ENCODE measurements at regions of chr20 and their contacts with region 1.

Region 1: DNA sequence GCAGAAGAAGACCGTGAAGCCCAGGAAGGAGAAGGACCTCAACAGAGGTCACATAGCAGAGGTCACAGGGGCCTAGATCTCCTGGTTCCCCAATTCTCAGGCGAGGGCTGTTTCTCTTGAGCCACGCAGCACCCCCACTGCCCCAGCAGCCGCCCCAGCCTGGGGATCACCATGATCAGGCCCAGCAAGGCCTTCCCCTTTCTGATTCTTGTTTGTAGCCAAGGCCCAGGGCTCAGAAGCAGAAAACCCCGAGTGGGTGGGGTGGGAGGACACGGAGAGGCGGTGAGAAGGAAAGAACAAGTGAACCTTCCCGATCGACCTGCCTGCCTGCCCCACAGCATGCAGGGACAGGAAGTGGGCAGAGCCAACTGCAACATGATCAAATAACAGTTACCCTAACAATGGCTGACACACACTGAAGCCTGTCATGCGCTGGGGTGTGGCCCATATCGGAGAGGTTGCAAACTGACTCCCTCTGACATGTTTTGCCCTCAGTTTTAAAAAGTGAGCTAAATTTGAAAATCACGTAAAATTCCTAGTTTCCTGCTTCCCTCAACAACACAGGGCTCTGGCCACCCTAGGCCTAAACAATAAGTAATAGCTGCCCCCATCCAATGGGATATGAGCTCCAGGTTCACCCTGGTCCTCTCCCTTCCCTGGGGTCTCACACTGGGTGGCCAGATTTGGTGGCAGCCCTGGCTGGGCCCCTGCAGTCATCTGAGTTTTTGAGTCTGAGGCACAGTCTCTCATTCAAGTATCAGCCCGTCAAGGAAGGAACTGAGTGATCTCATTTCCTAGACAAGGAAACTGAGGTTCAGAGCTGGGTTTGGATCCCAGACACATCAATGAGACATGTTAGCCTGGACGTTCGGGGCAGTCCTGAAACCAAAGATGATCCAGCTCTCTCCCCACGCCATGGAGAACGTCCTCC is 6.5 kb downstream of the PEDS1 start:
- DNase-seq: no peak
- ATAC-seq: no peak
- H3K4me3 ChIP-seq: no peak overlapping the region
- H3K27ac ChIP-seq: peak overlapping the region; percentile 0
- H3K4me1 ChIP-seq: peaks cover 63% of the 10 kb centered on the region
- H3K27me3 ChIP-seq: no peaks in the 10 kb centered on the region
- CTCF ChIP-seq: no peak
- EP300 ChIP-seq: no peak
- POLR2A ChIP-seq: no peak
- RAD21 ChIP-seq: no peak

Region 2: GRCh38 chr20:49747707-49748524 is 399.1 kb before region 1 on chr20:
- CTCF ChIA-PET with region 1: no interaction called
- POLR2A ChIA-PET with region 1: no interaction called
- in situ Hi-C with region 1: no loop called
- intact Hi-C with region 1: no loop called
- DNase-seq: peak; percentile 57
- ATAC-seq: peak; percentile 66
- H3K4me3 ChIP-seq: peak overlapping the region in 2 of 3 experiments; percentile 4 to 51; a peak in 1 of 6 replicates
- H3K27ac ChIP-seq: no peak overlapping the region
- H3K4me1 ChIP-seq: peaks cover 43% of the 10 kb centered on the region
- H3K27me3 ChIP-seq: peaks cover 0 to 15% of the 10 kb centered on the region in 2 experiments; a peak in 2 of 5 replicates
- CTCF ChIP-seq: no peak
- EP300 ChIP-seq: no peak
- POLR2A ChIP-seq: no peak
- RAD21 ChIP-seq: no peak

Region 3: DNA sequence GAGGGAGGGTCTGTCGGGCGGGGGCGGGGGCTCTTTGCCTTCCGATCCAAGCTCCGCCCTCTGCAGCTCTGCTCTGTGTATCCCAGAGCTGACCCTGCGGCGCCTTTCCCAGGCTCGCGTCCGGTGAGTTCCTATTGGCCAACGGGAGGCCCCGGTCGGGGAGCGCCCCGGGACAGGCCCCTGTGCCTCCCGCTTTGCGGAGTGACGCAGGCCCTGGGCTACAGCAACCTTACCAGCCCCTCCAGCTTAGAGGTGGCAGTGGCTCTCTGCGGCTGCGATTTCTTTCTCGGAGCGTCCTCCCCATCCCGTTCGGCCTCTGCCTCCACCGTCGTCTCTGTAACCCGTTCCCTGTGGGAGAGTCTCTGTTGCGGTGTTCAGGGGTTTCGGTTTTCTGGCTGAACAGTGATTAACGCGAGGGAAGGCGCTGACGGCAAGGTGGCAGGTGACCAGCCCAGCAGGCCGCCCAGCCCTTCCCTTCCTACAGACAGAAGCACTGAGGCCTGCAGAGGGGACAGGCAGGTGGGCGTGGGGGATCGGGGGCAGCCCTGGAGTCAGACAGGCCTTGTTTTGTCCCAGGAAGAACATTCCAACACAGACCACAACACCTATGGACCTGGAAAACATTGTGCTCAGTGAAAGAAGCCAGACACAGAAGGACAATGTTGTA is 25.5 kb after region 1 on chr20:
- CTCF ChIA-PET with region 1: no interaction called
- POLR2A ChIA-PET with region 1: interaction called, 89 read pairs
- in situ Hi-C with region 1: no loop called
- intact Hi-C with region 1: loop called (anchors 2 kb)
- DNase-seq: peak; percentile 97
- ATAC-seq: peak; percentile 96
- H3K4me3 ChIP-seq: peak overlapping the region; percentile 63 to 78 (median 64)
- H3K27ac ChIP-seq: peak overlapping the region; percentile 81
- H3K4me1 ChIP-seq: peaks cover 57% of the 10 kb centered on the region
- H3K27me3 ChIP-seq: no peaks in the 10 kb centered on the region; a peak in 1 of 5 replicates
- CTCF ChIP-seq: peak; percentile 44
- EP300 ChIP-seq: peak; percentile 45 to 58; a peak in 1 of 4 replicates
- POLR2A ChIP-seq: peak; percentile 95 to 96
- RAD21 ChIP-seq: peak; percentile 48

Measured in HepG2 (cell line).